ENCODE measurements at regions of chr2 and their contacts with region 1.

Region 1: GRCh38 chr2:223957092-223957851 is at the start of gene MRPL44:
- DNase-seq: peak; percentile 97 to 100
- H3K4me3 ChIP-seq: peak within 1 kb of the TSS; percentile 93
- H3K4me3 Mint-ChIP-seq: peak within 1 kb of the TSS; percentile 92
- H3K27ac Mint-ChIP-seq: peak within 1 kb of the TSS; percentile 98
- H3K4me1 ChIP-seq: peaks cover 12% of the 10 kb centered on the region
- H3K4me1 Mint-ChIP-seq: peaks cover 35% of the 10 kb centered on the region
- H3K27me3 ChIP-seq: no peaks in the 10 kb centered on the region
- H3K27me3 Mint-ChIP-seq: no peaks in the 10 kb centered on the region
- CTCF ChIP-seq: no peak
- total RNA-seq, gene MRPL44: 64.9 and 66.6 TPM in 2 replicates

Region 2: DNA sequence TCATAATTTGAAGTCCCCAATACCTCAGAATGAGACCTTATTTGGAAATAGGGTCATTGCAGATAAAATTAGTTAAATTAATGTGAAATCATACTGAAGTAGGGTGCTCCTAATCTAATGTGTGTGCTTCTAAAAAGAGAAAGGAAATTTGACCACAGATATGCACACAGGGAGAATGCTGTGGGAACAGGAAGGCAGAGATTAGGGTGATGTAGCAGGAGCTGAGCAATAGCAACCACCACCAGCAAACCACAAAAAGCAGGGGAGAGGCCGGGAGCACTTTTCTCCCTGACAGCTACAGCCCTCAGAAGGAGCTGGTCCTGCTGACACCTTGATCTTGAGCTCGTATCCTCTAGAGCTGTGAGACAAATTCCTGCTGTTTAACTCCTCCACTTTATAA is 330.6 kb before region 1 on chr2:
- CTCF ChIA-PET with region 1: no interaction called
- POLR2A ChIA-PET with region 1: no interaction called
- intact Hi-C with region 1: no loop called
- DNase-seq: no peak
- H3K4me3 ChIP-seq: no peak overlapping the region
- H3K4me3 Mint-ChIP-seq: no peak overlapping the region
- H3K27ac Mint-ChIP-seq: no peak overlapping the region
- H3K4me1 ChIP-seq: no peaks in the 10 kb centered on the region
- H3K4me1 Mint-ChIP-seq: no peaks in the 10 kb centered on the region
- H3K27me3 ChIP-seq: no peaks in the 10 kb centered on the region
- H3K27me3 Mint-ChIP-seq: peaks cover 23% of the 10 kb centered on the region
- CTCF ChIP-seq: no peak

Region 3: DNA sequence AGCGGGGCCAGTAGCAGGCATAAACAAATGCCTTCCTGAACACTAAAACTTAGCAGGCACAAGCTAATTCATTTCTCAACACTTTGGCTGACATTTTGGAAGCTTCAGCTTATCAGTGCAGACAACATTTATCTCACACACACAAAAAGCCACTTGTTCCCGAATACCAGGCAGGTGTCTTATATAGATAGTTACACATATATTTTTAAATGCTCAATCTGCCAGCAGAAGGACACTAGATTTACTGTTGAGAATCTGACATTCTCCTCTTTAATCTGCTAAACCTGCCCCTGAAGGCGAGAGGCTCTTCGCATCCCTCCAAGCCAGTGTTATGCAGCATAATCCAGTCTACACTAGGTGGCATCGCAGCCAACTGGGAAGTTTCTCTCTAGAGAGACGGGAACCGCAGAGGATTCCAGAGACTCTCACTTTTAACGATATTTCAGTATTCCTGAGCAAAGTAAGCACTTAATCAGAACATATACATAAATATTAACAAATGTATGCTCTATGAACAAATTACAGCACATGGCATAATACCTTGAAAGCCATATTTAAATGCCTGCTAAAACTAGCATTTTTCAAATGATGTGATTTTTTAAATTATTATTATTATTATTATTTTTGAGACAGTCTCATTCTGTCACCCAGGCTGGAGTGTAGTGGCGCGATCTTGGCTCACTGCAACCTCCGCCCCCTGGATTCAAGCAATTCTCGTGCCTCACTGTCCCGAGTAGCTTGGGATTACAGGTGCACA is 264.9 kb before region 1 on chr2:
- CTCF ChIA-PET with region 1: no interaction called
- POLR2A ChIA-PET with region 1: no interaction called
- intact Hi-C with region 1: loop called (anchors 5 kb)
- DNase-seq: peak; percentile 71 to 76
- H3K4me3 ChIP-seq: no peak overlapping the region
- H3K4me3 Mint-ChIP-seq: no peak overlapping the region
- H3K27ac Mint-ChIP-seq: no peak overlapping the region
- H3K4me1 ChIP-seq: no peaks in the 10 kb centered on the region
- H3K4me1 Mint-ChIP-seq: no peaks in the 10 kb centered on the region
- H3K27me3 ChIP-seq: no peaks in the 10 kb centered on the region
- H3K27me3 Mint-ChIP-seq: no peaks in the 10 kb centered on the region
- CTCF ChIP-seq: peak; percentile 75 to 96

Region 4: GRCh38 chr2:223779877-223780276 is 177.4 kb before region 1 on chr2:
- CTCF ChIA-PET with region 1: no interaction called
- POLR2A ChIA-PET with region 1: no interaction called
- intact Hi-C with region 1: loop called (anchors 5 kb)
- DNase-seq: peak; percentile 78 to 81
- H3K4me3 ChIP-seq: no peak overlapping the region
- H3K4me3 Mint-ChIP-seq: no peak overlapping the region
- H3K27ac Mint-ChIP-seq: no peak overlapping the region
- H3K4me1 ChIP-seq: peaks cover 5% of the 10 kb centered on the region; the same call in 1 of the 2 replicates
- H3K4me1 Mint-ChIP-seq: peaks cover 20% of the 10 kb centered on the region
- H3K27me3 ChIP-seq: no peaks in the 10 kb centered on the region
- H3K27me3 Mint-ChIP-seq: no peaks in the 10 kb centered on the region
- CTCF ChIP-seq: peak; percentile 40 to 56

Region 5: GRCh38 chr2:223909001-223909741 is 48.1 kb before region 1 on chr2:
- CTCF ChIA-PET with region 1: no interaction called
- POLR2A ChIA-PET with region 1: no interaction called
- intact Hi-C with region 1: loop called (anchors 1 kb)
- DNase-seq: peak in 1 of 2 experiments; percentile 48
- H3K4me3 ChIP-seq: no peak overlapping the region
- H3K4me3 Mint-ChIP-seq: peak overlapping the region; percentile 57
- H3K27ac Mint-ChIP-seq: peak overlapping the region; percentile 80
- H3K4me1 ChIP-seq: peaks cover 41% of the 10 kb centered on the region
- H3K4me1 Mint-ChIP-seq: peaks cover 37% of the 10 kb centered on the region
- H3K27me3 ChIP-seq: no peaks in the 10 kb centered on the region
- H3K27me3 Mint-ChIP-seq: no peaks in the 10 kb centered on the region
- CTCF ChIP-seq: no peak

Region 6: GRCh38 chr2:223944703-223945531 is 12.4 kb before region 1 on chr2 and contains the start of gene WDFY1:
- CTCF ChIA-PET with region 1: no interaction called
- POLR2A ChIA-PET with region 1: interaction called, 6 read pairs
- intact Hi-C with region 1: loop called (anchors 1 kb)
- DNase-seq: peak; percentile 90 to 96
- H3K4me3 ChIP-seq: peak within 1 kb of the TSS; percentile 96
- H3K4me3 Mint-ChIP-seq: peak within 1 kb of the TSS; percentile 97
- H3K27ac Mint-ChIP-seq: peak within 1 kb of the TSS; percentile 94
- H3K4me1 ChIP-seq: peaks cover 18% of the 10 kb centered on the region
- H3K4me1 Mint-ChIP-seq: peaks cover 39% of the 10 kb centered on the region
- H3K27me3 ChIP-seq: no peaks in the 10 kb centered on the region
- H3K27me3 Mint-ChIP-seq: no peaks in the 10 kb centered on the region
- CTCF ChIP-seq: no peak
- total RNA-seq, gene WDFY1: 110 and 123 TPM in 2 replicates

Region 7: DNA sequence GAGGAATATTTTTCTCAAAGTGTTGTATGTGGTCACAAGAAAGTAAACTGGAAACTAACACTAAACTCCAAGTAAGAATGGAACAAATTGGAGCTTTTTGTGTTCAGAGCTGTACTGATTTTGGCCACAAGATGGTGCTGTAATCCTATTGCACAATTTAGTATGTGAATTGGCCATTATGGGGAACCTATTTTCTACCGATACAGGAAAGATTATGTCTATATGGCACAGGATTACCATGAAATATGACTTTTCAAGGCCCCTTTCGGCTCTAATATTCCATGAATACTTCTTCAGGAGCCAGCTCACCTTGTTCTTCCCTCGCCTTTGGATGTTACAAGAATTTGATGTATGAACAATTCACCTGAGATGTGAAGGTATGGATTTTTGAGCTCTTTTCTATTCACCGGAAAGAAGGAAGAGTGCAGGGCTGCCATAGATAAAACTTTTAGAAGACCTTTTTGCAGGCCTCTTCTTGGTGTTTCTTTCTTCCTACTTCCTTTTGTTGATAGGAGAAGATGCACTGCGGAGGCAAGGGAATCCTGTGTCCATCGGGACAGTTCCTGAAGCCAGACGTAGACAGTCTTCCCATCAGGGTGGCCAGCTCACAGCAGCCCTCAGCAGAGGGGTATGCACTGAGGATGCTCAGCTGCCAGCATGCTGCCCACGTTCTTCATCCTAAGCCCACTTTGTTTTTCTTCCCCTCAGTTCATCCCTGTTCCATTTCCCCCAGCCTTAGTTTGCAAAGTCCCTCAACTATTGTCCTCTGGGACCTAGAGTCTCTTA is 13.3 kb after region 1 on chr2:
- CTCF ChIA-PET with region 1: interaction called, 10 read pairs
- POLR2A ChIA-PET with region 1: interaction called, 3 read pairs
- intact Hi-C with region 1: no loop called
- DNase-seq: peak in 1 of 2 experiments; percentile 76
- H3K4me3 ChIP-seq: no peak overlapping the region
- H3K4me3 Mint-ChIP-seq: no peak overlapping the region
- H3K27ac Mint-ChIP-seq: no peak overlapping the region
- H3K4me1 ChIP-seq: no peaks in the 10 kb centered on the region
- H3K4me1 Mint-ChIP-seq: no peaks in the 10 kb centered on the region
- H3K27me3 ChIP-seq: no peaks in the 10 kb centered on the region
- H3K27me3 Mint-ChIP-seq: no peaks in the 10 kb centered on the region
- CTCF ChIP-seq: peak; percentile 95 to 98